ENCODE measurements at regions of chr11 and their contacts with region 1.

Region 1: GRCh38 chr11:5550440-5551095 is 2.2 kb upstream of the OR52H1 start:
- DNase-seq: peak; percentile 11
- H3K4me3 Mint-ChIP-seq: no peak overlapping the region
- H3K27ac Mint-ChIP-seq: no peak overlapping the region
- H3K4me1 Mint-ChIP-seq: peaks cover 13% of the 10 kb centered on the region
- H3K27me3 Mint-ChIP-seq: peaks cover 19% of the 10 kb centered on the region
- CTCF ChIP-seq: no peak

Region 2: GRCh38 chr11:5123802-5124521 is 426.6 kb before region 1 on chr11:
- CTCF ChIA-PET with region 1: no interaction called
- POLR2A ChIA-PET with region 1: no interaction called
- intact Hi-C with region 1: loop called (anchors 10 kb)
- DNase-seq: peak; percentile 74
- H3K4me3 Mint-ChIP-seq: no peak overlapping the region
- H3K27ac Mint-ChIP-seq: no peak overlapping the region
- H3K4me1 Mint-ChIP-seq: no peaks in the 10 kb centered on the region
- H3K27me3 Mint-ChIP-seq: peaks cover 62% of the 10 kb centered on the region
- CTCF ChIP-seq: peak; percentile 80

Region 3: DNA sequence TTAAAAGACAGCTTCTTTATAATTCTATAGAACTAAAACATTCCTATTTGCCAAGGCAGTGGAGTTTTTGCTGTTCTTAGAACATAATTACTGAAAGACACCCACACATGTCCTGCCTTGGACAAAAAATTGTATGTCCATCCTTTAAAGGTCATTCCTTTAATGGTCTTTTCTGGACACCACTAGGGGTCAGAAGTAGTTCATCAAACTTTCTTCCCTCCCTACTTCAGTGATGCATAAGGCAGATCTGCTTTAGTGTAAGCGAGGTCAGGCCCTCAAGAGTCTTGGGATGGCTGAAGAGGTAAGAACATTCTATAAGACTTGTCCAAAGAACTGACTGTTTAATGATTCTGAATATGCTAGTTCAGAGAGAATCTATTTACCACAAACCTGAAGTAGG is 345.8 kb before region 1 on chr11:
- CTCF ChIA-PET with region 1: interaction called, 3 read pairs
- POLR2A ChIA-PET with region 1: no interaction called
- intact Hi-C with region 1: loop called (anchors 5 kb)
- DNase-seq: peak; percentile 63
- H3K4me3 Mint-ChIP-seq: no peak overlapping the region
- H3K27ac Mint-ChIP-seq: no peak overlapping the region
- H3K4me1 Mint-ChIP-seq: peaks cover 5% of the 10 kb centered on the region
- H3K27me3 Mint-ChIP-seq: peaks cover 39% of the 10 kb centered on the region
- CTCF ChIP-seq: peak; percentile 58

Region 4: DNA sequence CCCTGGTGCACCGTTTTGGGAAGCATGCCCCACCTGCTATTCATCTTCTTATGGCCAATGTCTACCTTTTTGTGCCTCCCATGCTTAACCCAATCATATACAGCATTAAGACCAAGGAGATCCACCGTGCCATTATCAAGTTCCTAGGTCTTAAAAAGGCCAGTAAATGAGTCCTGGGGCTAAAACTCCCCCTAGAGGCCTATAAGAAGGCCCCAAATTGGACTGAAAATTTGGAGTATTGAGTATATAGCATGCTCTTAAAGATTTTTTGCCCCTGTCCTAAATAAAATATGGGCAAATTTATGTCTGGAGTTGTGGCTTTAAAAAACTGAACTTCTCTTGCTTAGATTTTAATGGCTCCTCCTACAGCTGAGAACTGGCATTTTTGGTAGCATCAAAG is 160.4 kb before region 1 on chr11:
- CTCF ChIA-PET with region 1: no interaction called
- POLR2A ChIA-PET with region 1: no interaction called
- intact Hi-C with region 1: no loop called
- DNase-seq: no peak
- H3K4me3 Mint-ChIP-seq: no peak overlapping the region
- H3K27ac Mint-ChIP-seq: no peak overlapping the region
- H3K4me1 Mint-ChIP-seq: no peaks in the 10 kb centered on the region
- H3K27me3 Mint-ChIP-seq: no peaks in the 10 kb centered on the region
- CTCF ChIP-seq: no peak

Region 5: GRCh38 chr11:5624489-5625279 is 74.1 kb after region 1 on chr11 and contains the start of gene TRIM34:
- CTCF ChIA-PET with region 1: no interaction called
- POLR2A ChIA-PET with region 1: no interaction called
- intact Hi-C with region 1: no loop called
- DNase-seq: peak; percentile 83
- H3K4me3 Mint-ChIP-seq: peak within 1 kb of the TSS; percentile 81
- H3K27ac Mint-ChIP-seq: peak within 1 kb of the TSS; percentile 57
- H3K4me1 Mint-ChIP-seq: peaks cover 31% of the 10 kb centered on the region
- H3K27me3 Mint-ChIP-seq: no peaks in the 10 kb centered on the region
- CTCF ChIP-seq: no peak
- total RNA-seq, gene TRIM34: 0.96 and 2.1 TPM in 2 replicates

Measured in MCF 10A (cell line).